ENCODE measurements at regions of chr11 and their contacts with region 1.

Region 1: DNA sequence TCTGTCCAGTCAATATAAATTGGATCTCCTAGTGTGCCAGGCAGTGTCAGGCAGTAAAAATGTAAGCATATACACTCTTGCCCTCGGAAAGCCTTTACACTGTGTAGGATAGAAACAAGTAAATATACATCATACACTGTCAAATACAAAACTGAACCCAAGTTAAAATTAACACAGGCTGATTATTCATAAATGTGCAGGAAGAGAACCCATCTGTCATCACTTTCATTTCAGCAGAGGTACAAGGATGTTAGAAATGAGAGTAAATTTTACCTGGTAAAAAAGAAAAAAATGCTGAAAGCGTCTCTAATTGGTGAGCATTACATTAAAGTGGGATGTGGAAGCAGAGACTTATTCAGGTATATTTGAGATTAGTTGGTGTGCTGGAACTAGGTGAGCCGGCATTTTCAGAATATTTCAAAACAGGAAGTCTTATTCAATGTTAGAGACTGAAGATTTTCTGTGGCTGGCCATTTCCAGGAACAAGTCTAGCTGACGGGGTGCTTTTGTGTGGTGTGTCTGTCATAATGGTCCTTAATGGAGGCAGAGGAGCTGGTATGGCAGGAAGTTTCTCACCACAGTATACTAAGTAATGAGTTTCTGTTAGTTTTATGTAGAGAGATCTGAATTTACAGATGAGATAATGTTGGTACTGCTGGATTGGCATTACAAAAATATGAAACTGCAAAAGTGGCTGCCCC is 192.6 kb downstream of the CASP12 start:
- DNase-seq: peak; percentile 89
- H3K4me3 Mint-ChIP-seq: peak overlapping the region; percentile 61
- H3K27ac Mint-ChIP-seq: peak overlapping the region; percentile 80
- H3K4me1 Mint-ChIP-seq: peaks cover 48% of the 10 kb centered on the region
- H3K27me3 Mint-ChIP-seq: no peaks in the 10 kb centered on the region

Region 2: DNA sequence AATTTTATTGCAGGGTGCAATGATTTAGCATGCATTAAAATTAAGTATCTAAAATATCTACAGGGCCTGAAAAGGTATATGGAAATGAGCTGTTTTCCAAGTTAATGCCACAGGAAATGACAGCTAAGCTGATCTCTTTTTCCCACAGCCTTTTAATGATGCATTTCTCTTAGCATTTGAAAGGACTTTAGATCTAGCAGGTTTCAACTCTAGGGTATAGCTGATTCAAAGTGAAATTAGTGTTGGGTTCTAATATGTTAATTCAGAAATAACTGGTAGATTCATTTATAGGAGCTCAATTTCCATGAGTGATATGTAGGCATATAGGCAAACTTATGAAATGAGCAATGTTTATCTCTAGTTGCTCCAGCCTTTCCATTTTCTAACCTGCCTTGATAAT is 81.6 kb before region 1 on chr11:
- CTCF ChIA-PET with region 1: interaction called, 3 read pairs
- intact Hi-C with region 1: loop called (anchors 1 kb)
- DNase-seq: no peak
- H3K4me3 Mint-ChIP-seq: no peak overlapping the region
- H3K27ac Mint-ChIP-seq: no peak overlapping the region
- H3K4me1 Mint-ChIP-seq: peaks cover 20% of the 10 kb centered on the region
- H3K27me3 Mint-ChIP-seq: no peaks in the 10 kb centered on the region

Region 3: DNA sequence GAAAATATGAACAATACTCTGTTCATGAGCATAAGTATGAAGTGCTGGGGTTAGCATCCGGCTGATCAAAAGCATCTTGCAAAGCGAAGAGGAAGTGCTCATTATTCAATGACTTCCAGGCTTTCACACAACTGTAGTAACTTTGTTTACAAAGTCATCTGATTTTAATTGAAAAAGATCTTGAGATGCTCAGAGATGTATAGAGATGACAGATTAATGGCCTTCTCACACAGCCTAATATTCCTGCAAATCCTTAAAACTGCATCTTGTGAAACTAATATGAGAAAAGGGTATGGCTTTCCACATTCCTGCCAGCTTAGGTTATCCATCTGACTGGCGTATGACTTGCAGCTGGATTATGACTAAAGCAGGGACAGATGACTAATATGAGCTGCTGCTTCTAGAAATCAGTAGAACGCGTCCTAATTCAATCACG is 67.2 kb after region 1 on chr11:
- CTCF ChIA-PET with region 1: no interaction called
- intact Hi-C with region 1: loop called (anchors 2 kb)
- DNase-seq: peak; percentile 20
- H3K4me3 Mint-ChIP-seq: no peak overlapping the region
- H3K27ac Mint-ChIP-seq: no peak overlapping the region
- H3K4me1 Mint-ChIP-seq: peaks cover 18% of the 10 kb centered on the region
- H3K27me3 Mint-ChIP-seq: no peaks in the 10 kb centered on the region

Region 4: DNA sequence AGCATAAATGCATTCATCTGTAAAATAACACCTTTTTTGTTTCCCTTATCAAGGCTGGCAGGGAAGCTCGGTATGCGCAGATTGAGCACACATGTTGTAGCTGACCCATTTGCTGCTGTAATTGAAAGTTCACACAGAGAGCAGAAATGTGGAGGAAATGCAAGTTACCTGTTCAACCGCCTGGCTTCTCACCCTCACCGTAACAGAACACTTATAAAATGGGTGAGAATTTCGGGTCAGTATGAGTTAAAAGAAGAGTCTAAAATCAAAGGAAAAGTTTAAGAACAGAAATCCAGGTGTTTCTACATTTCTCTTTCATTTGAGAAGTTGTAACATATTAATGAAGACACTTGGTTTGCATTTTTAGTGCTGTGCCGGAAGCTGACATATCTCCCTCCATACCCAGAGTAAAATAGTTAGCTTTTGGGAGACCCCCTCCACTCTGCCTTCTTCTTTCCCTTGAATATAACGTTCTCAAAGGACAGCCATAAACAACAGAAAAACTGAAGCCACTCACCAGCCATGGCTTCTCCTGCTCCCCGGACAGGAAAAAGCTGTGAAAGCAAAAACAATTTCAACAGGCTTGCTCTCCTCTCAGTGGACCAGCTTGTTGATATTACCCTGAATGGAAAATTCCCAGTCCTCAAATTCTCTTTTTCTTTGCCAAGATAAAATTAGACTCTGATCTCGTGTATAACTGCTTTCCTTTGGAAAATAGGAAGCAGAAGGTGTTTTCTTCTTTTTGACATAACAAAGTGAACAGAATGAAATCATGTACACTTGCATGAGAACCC is 192.4 kb after region 1 on chr11 and contains the start of gene CASP12:
- CTCF ChIA-PET with region 1: interaction called, 3 read pairs
- intact Hi-C with region 1: loop called (anchors 1 kb)
- DNase-seq: peak; percentile 32
- H3K4me3 Mint-ChIP-seq: peak within 1 kb of the TSS; percentile 64
- H3K27ac Mint-ChIP-seq: peak within 1 kb of the TSS; percentile 76
- H3K4me1 Mint-ChIP-seq: peaks cover 26% of the 10 kb centered on the region
- H3K27me3 Mint-ChIP-seq: no peaks in the 10 kb centered on the region
- total RNA-seq, gene CASP12: not detected

Region 5: DNA sequence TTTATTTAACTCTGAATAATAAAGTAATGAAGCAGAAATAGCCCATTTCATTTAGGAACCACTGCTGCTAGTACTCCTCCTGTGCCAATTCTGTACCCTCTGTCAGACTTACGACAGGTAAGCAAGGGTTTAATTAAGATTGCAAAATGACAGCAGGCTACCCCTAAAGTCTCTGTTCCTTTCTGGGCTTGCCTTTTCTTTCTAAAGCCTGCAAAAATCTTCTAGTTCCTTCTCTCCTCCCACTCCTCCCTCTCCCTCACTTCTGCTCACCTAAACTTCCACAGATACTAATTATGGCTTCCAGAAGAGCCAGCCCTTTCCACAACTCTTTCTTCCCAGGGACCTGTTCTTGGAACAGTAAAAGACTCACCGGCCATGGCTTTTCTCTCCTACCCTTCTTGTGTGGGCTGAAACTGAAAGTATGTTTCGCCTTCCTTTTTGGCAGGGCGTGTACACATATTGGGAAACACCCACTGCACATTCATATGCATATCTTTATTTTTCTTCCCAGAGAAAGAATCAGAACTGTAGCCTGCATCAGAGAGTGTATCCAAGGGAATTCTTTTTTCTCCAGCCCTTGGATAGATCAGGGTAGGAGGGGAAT is 339.4 kb after region 1 on chr11 and contains the start of gene CARD16:
- CTCF ChIA-PET with region 1: no interaction called
- intact Hi-C with region 1: loop called (anchors 5 kb)
- DNase-seq: peak; percentile 64
- H3K4me3 Mint-ChIP-seq: peak within 1 kb of the TSS; percentile 83
- H3K27ac Mint-ChIP-seq: peak within 1 kb of the TSS; percentile 82
- H3K4me1 Mint-ChIP-seq: peaks cover 46% of the 10 kb centered on the region
- H3K27me3 Mint-ChIP-seq: no peaks in the 10 kb centered on the region
- total RNA-seq, gene CARD16: 9.5 to 10.9 TPM

Region 6: DNA sequence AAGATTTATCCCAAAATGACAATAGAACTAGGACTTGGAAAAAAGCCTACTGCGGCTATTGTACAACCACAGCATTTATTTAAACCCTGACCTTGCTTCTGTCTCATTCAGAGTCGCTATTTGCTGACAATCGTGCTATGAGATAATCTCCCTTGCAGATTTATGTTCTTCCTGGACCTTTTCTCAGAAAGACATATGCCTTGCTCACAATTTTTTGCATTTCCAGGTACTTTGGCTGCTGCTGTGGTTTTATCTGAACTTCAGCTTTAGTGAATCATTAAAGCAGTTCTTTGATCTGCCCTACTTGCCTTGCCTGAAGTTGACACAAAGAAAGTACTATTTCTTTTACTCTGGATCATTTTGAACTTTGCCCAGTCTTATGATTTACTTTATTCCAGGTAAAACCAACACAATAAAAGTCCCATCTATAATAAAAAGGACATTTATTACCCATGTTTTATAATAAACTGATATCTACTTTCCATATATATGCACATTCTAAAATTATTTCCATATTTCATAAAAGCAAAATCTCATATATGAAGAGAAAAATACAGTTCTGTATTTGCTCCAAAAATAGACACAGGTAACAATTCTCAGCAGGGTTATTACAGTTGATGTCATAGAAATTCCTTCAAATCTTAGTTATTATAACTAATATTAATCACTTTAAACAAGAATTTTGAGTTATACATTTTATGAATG is 497.4 kb after region 1 on chr11:
- CTCF ChIA-PET with region 1: no interaction called
- intact Hi-C with region 1: loop called (anchors 2 kb)
- DNase-seq: peak; percentile 32
- H3K4me3 Mint-ChIP-seq: no peak overlapping the region
- H3K27ac Mint-ChIP-seq: peak overlapping the region; percentile 15
- H3K4me1 Mint-ChIP-seq: peaks cover 16% of the 10 kb centered on the region
- H3K27me3 Mint-ChIP-seq: no peaks in the 10 kb centered on the region

Region 7: DNA sequence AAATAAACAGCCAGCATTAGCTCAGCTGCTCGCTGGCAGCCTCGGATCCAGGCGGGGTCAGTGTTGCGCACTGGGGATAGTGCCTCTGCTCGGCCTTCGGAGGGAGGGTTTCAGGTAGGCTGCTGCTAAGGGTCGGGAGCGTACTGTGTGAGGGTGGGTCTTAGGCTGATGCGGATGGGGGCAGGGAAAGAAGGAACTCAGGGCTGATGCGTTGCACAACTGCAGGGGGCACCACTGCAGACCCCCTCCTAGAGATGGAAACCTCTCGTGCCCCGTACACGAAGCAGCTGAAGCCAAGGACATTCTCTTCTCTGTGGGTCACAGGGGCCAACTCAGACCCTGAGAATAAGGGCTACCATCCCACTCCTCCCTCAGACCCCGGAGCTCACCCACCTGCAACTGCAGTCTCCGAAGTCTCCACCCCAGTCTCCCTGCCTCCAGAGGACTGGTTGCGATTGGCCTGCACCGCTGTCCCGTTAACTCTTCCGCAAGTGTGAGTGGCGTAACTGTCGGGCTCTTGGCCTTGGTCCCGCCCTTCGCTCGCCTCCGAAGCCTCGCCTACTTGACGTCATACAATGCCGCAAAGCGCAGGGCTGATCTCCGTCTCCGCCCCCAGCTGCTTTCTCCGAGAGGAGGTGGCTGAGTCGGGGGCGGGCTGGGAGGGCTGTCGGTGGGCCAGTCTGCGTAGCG is 1371.4 kb after region 1 on chr11 and contains the start of gene KBTBD3:
- CTCF ChIA-PET with region 1: no interaction called
- intact Hi-C with region 1: loop called (anchors 10 kb)
- DNase-seq: peak; percentile 98
- H3K4me3 Mint-ChIP-seq: peak within 1 kb of the TSS; percentile 91
- H3K27ac Mint-ChIP-seq: peak within 1 kb of the TSS; percentile 93
- H3K4me1 Mint-ChIP-seq: peaks cover 47% of the 10 kb centered on the region
- H3K27me3 Mint-ChIP-seq: no peaks in the 10 kb centered on the region
- total RNA-seq, gene KBTBD3: 6.6 to 7.9 TPM

Measured in activated naive CD4-positive, alpha-beta T cell treated with anti-CD3 and anti-CD28 coated beads for 36 hours (primary cell).